ENCODE measurements at regions of chr2 and their contacts with region 1.

Region 1: DNA sequence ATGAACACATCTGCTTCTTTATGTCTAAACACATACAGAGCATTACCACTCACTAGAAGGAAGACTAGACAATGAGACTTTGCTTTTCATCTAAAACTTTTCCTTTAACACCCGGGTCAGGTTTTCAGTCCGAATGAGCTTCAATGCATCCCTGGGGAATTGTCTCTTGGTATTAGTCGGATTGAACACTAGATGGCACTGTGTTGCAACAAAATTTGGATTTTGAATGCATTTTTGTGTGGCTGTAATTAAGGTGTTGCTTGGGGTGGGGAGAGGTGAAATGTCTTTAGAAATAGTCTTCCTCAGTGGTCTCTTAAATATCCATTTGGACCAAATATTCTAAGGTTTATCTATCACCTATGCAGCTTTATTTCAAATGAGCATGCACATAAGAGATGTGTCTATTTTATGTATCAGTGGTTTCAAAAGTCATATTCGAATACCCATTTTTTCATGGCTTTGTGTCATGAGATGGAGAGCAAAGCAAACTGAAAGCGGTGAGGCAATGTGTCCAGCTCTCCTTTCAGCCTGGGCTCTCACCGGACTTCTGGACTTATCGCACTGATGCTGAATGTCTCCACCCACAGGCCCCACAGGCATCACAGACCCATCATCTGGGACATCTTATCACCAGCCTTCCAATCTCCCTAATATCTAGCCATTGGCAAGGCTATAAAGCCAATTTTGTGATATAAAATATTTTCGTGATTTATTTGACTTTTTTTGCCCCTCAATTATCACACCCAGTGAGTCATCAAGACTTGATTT is 510.3 kb downstream of the RNF144A start:
- DNase-seq: peak in 4 of 9 experiments; percentile 11 to 83 (median 57)
- ATAC-seq: peak; percentile 46
- H3K4me3 ChIP-seq: no peak overlapping the region
- H3K4me3 Mint-ChIP-seq: no peak overlapping the region
- H3K27ac ChIP-seq: peak overlapping the region in 1 of 2 experiments; percentile 37
- H3K27ac Mint-ChIP-seq: peak overlapping the region; percentile 64
- H3K4me1 ChIP-seq: peaks cover 39% of the 10 kb centered on the region
- H3K4me1 Mint-ChIP-seq: peaks cover 49% of the 10 kb centered on the region
- H3K27me3 ChIP-seq: no peaks in the 10 kb centered on the region
- H3K27me3 Mint-ChIP-seq: no peaks in the 10 kb centered on the region
- CTCF ChIP-seq: peak; percentile 94

Region 2: GRCh38 chr2:7111626-7112025 is 315.9 kb before region 1 on chr2:
- CTCF ChIA-PET with region 1: no interaction called
- POLR2A ChIA-PET with region 1: no interaction called
- intact Hi-C with region 1: no loop called
- DNase-seq: no peak
- ATAC-seq: no peak
- H3K4me3 ChIP-seq: no peak overlapping the region
- H3K4me3 Mint-ChIP-seq: no peak overlapping the region
- H3K27ac ChIP-seq: no peak overlapping the region
- H3K27ac Mint-ChIP-seq: no peak overlapping the region
- H3K4me1 ChIP-seq: no peaks in the 10 kb centered on the region
- H3K4me1 Mint-ChIP-seq: no peaks in the 10 kb centered on the region
- H3K27me3 ChIP-seq: no peaks in the 10 kb centered on the region
- H3K27me3 Mint-ChIP-seq: no peaks in the 10 kb centered on the region
- CTCF ChIP-seq: no peak

Region 3: GRCh38 chr2:7203055-7203467 is 224.4 kb before region 1 on chr2:
- CTCF ChIA-PET with region 1: interaction called, 3 read pairs
- POLR2A ChIA-PET with region 1: no interaction called
- intact Hi-C with region 1: loop called (anchors 5 to 10 kb)
- DNase-seq: peak; percentile 32 to 77 (median 59)
- ATAC-seq: peak; percentile 69
- H3K4me3 ChIP-seq: no peak overlapping the region
- H3K4me3 Mint-ChIP-seq: no peak overlapping the region
- H3K27ac ChIP-seq: no peak overlapping the region
- H3K27ac Mint-ChIP-seq: no peak overlapping the region
- H3K4me1 ChIP-seq: no peaks in the 10 kb centered on the region
- H3K4me1 Mint-ChIP-seq: peaks cover 2% of the 10 kb centered on the region
- H3K27me3 ChIP-seq: no peaks in the 10 kb centered on the region
- H3K27me3 Mint-ChIP-seq: no peaks in the 10 kb centered on the region
- CTCF ChIP-seq: peak; percentile 95

Region 4: DNA sequence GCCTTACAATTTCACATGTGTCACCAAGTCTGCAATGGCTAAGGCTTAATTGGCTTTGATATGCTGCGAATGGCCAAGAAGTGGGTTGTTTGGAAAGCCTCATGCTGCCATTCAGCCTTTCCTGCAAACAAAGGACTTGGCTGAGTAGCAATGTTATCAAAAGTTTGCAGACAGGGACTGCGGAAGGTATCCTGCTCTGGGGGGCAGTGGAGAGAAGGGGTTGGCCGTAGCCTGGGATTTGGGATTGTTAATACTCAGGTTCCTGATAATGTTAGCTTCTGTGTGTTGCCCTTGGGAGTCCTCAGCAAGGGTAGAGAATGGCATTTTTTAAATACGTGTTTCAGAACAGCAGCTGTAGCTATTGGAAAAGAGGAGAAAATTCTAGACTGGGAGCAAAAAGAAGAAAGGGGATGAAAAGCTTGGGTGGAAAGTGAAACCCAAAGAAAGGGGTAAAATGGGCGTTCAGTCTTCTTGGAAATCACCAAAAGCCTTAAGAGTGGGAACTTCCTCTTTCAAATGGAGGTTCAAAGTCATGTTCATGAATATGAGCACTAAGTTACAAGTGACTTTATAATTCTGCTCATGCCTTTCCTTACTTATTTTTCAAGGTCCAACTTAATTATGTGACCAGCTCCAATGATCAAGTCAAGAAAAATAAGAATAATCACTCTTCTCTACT is 185.1 kb before region 1 on chr2:
- CTCF ChIA-PET with region 1: no interaction called
- POLR2A ChIA-PET with region 1: no interaction called
- intact Hi-C with region 1: no loop called
- DNase-seq: no peak
- ATAC-seq: no peak
- H3K4me3 ChIP-seq: no peak overlapping the region
- H3K4me3 Mint-ChIP-seq: no peak overlapping the region
- H3K27ac ChIP-seq: no peak overlapping the region
- H3K27ac Mint-ChIP-seq: no peak overlapping the region
- H3K4me1 ChIP-seq: no peaks in the 10 kb centered on the region
- H3K4me1 Mint-ChIP-seq: no peaks in the 10 kb centered on the region
- H3K27me3 ChIP-seq: no peaks in the 10 kb centered on the region
- H3K27me3 Mint-ChIP-seq: no peaks in the 10 kb centered on the region
- CTCF ChIP-seq: no peak

Region 5: GRCh38 chr2:7467782-7468447 is 40.4 kb after region 1 on chr2:
- CTCF ChIA-PET with region 1: no interaction called
- POLR2A ChIA-PET with region 1: no interaction called
- intact Hi-C with region 1: loop called (anchors 5 kb)
- DNase-seq: peak in 5 of 9 experiments; percentile 45 to 86 (median 72)
- ATAC-seq: peak; percentile 95
- H3K4me3 ChIP-seq: no peak overlapping the region
- H3K4me3 Mint-ChIP-seq: peak overlapping the region; percentile 26
- H3K27ac ChIP-seq: peak overlapping the region; percentile 24 to 60
- H3K27ac Mint-ChIP-seq: peak overlapping the region; percentile 88
- H3K4me1 ChIP-seq: peaks cover 31% of the 10 kb centered on the region
- H3K4me1 Mint-ChIP-seq: peaks cover 49% of the 10 kb centered on the region
- H3K27me3 ChIP-seq: no peaks in the 10 kb centered on the region
- H3K27me3 Mint-ChIP-seq: no peaks in the 10 kb centered on the region
- CTCF ChIP-seq: no peak

Region 6: GRCh38 chr2:7672027-7672684 is 244.7 kb after region 1 on chr2:
- CTCF ChIA-PET with region 1: interaction called, 12 read pairs
- POLR2A ChIA-PET with region 1: interaction called, 8 read pairs
- intact Hi-C with region 1: loop called (anchors 1 kb)
- DNase-seq: peak; percentile 18 to 78 (median 47)
- ATAC-seq: peak; percentile 64
- H3K4me3 ChIP-seq: peak overlapping the region in 1 of 2 experiments; percentile 0
- H3K4me3 Mint-ChIP-seq: peak overlapping the region; percentile 57
- H3K27ac ChIP-seq: peak overlapping the region; percentile 4 to 42
- H3K27ac Mint-ChIP-seq: peak overlapping the region; percentile 95
- H3K4me1 ChIP-seq: peaks cover 29% of the 10 kb centered on the region
- H3K4me1 Mint-ChIP-seq: peaks cover 39% of the 10 kb centered on the region
- H3K27me3 ChIP-seq: no peaks in the 10 kb centered on the region
- H3K27me3 Mint-ChIP-seq: no peaks in the 10 kb centered on the region
- CTCF ChIP-seq: peak; percentile 61

Region 7: DNA sequence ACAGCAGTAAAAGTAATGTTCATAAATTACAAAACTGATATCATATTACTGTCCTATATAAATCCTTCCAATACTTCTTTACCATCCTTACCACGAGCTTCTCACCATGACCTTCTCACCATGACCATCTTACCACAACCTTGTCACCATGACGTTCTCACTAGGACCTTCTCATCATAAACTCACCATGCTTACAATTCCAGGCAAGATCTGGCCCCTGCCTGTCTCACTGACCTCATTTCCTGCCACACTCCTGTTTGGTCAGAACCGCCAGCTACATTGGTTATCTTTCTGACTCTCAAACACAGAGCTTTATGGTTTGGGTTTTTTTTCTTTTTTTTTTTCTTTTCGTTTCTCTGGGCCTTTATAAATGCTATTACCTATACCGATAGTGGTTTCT is 317.4 kb after region 1 on chr2:
- CTCF ChIA-PET with region 1: interaction called, 40 read pairs
- POLR2A ChIA-PET with region 1: interaction called, 5 read pairs
- intact Hi-C with region 1: loop called (anchors 1 to 5 kb)
- DNase-seq: peak in 8 of 9 experiments; percentile 23 to 93 (median 48)
- ATAC-seq: peak; percentile 74
- H3K4me3 ChIP-seq: peak overlapping the region in 1 of 2 experiments; percentile 10
- H3K4me3 Mint-ChIP-seq: no peak overlapping the region
- H3K27ac ChIP-seq: peak overlapping the region in 1 of 2 experiments; percentile 66
- H3K27ac Mint-ChIP-seq: peak overlapping the region; percentile 72
- H3K4me1 ChIP-seq: peaks cover 21% of the 10 kb centered on the region
- H3K4me1 Mint-ChIP-seq: peaks cover 62% of the 10 kb centered on the region
- H3K27me3 ChIP-seq: no peaks in the 10 kb centered on the region
- H3K27me3 Mint-ChIP-seq: no peaks in the 10 kb centered on the region
- CTCF ChIP-seq: no peak

Region 8: DNA sequence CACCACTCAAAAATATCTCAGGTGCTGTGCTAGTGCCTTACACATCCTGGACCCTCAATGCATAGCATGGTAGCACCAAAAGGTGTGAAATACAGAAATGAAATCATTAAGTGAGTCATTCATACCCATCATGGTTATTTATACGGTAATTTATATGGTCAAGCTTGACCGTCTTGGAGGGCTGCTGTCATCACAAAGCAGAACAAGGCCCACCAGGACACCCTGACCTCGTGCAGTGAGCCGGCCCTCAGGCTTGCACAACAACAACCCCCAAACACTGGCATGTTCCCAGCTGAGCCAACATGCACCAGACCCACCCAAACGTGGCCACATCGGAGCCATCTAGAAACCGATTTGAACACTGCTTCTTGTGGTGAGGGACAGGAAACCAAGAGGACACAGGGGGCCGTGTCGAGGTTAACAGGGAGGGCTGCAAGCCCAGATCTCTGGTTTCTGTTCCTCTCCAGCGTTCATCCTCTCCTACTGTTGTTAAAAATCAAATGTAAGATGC is 875.9 kb after region 1 on chr2:
- CTCF ChIA-PET with region 1: no interaction called
- POLR2A ChIA-PET with region 1: no interaction called
- intact Hi-C with region 1: loop called in 1 of 2 experiments (anchors 10 kb)
- DNase-seq: peak; percentile 63 to 87 (median 82)
- ATAC-seq: peak; percentile 83
- H3K4me3 ChIP-seq: peak overlapping the region; percentile 10 to 25
- H3K4me3 Mint-ChIP-seq: peak overlapping the region; percentile 69
- H3K27ac ChIP-seq: peak overlapping the region in 1 of 2 experiments; percentile 63
- H3K27ac Mint-ChIP-seq: peak overlapping the region; percentile 74
- H3K4me1 ChIP-seq: peaks cover 49% of the 10 kb centered on the region
- H3K4me1 Mint-ChIP-seq: peaks cover 55% of the 10 kb centered on the region
- H3K27me3 ChIP-seq: no peaks in the 10 kb centered on the region
- H3K27me3 Mint-ChIP-seq: peaks cover 1% of the 10 kb centered on the region
- CTCF ChIP-seq: peak; percentile 36

Region 9: DNA sequence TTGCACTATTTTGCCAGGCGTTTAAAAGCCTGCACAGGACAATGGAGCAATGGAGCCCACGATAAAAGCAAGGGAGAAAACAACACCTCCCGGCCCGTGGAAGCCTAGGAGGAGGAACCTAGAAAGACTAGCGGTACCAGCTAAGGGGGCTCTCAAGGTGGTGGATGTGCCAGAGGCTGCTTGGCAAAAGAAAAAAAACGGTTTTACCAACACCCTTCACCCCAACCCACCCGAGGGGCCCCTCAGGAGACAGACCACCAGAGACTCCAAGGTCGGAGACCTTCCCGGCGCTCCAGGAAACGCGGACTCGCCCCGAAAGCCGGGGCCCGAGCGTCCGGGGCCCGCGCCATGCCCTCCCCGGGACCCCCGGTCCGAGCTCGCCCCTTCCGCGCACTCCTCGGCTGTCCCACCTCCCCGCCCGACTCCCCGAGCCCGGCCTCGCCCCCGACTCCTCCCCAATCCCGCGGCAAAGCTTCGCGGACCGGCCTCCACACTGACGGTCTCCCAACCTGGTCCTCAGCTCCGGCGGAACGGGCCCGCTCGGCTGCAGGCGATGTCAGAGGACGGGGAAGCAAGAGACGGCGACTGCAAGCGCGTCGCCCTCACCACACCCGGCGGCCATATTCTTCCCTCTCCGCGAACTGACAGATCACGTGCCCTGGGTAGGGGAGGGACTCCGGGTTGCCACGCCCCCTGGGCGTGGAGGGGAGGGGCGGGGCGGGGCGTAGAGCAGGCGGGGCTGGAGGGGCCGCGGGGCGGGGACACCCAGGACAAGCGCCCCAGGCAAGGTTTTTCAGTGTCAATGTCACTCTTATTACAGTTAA is 1409.7 kb after region 1 on chr2 and contains the start of gene KIDINS220:
- CTCF ChIA-PET with region 1: no interaction called
- POLR2A ChIA-PET with region 1: no interaction called
- intact Hi-C with region 1: loop called in 1 of 2 experiments (anchors 2 kb)
- DNase-seq: peak; percentile 74 to 92 (median 85)
- ATAC-seq: peak; percentile 96
- H3K4me3 ChIP-seq: peak within 1 kb of the TSS; percentile 76 to 96
- H3K4me3 Mint-ChIP-seq: peak within 1 kb of the TSS; percentile 100
- H3K27ac ChIP-seq: peak within 1 kb of the TSS; percentile 62 to 81
- H3K27ac Mint-ChIP-seq: peak within 1 kb of the TSS; percentile 99
- H3K4me1 ChIP-seq: peaks cover 49% of the 10 kb centered on the region
- H3K4me1 Mint-ChIP-seq: peaks cover 55% of the 10 kb centered on the region
- H3K27me3 ChIP-seq: peaks cover 0 to 2% of the 10 kb centered on the region in 2 experiments
- H3K27me3 Mint-ChIP-seq: no peaks in the 10 kb centered on the region
- CTCF ChIP-seq: no peak
- total RNA-seq, gene KIDINS220: 26.2 to 28.8 TPM

Measured in CD8-positive, alpha-beta T cell (primary cell).